Panc1 (cell line): ENCODE measurements at regions of chrX and their contacts with region 1.

Region 1: GRCh38 chrX:45322382-45322781 is 121.7 kb upstream of the DIPK2B start:
- DNase-seq: peak; percentile 56
- ATAC-seq: peak; percentile 85; the same call in 1 of the 2 replicates
- H3K4me3 ChIP-seq: no peak overlapping the region
- H3K27ac ChIP-seq: no peak overlapping the region
- H3K4me1 ChIP-seq: no peaks in the 10 kb centered on the region
- H3K27me3 ChIP-seq: no peaks in the 10 kb centered on the region
- CTCF ChIP-seq: peak; percentile 63

Region 2: GRCh38 chrX:45505214-45505613 is 182.8 kb after region 1 on chrX:
- CTCF ChIA-PET with region 1: no interaction called
- POLR2A ChIA-PET with region 1: no interaction called
- in situ Hi-C with region 1: no loop called
- intact Hi-C with region 1: loop called (anchors 10 kb)
- DNase-seq: no peak
- ATAC-seq: no peak
- H3K4me3 ChIP-seq: no peak overlapping the region
- H3K27ac ChIP-seq: peak overlapping the region; percentile 39; the same call in 1 of the 2 replicates
- H3K4me1 ChIP-seq: peaks cover 11% of the 10 kb centered on the region
- H3K27me3 ChIP-seq: no peaks in the 10 kb centered on the region
- CTCF ChIP-seq: no peak

Region 3: GRCh38 chrX:45749375-45749774 is 427.0 kb after region 1 on chrX:
- CTCF ChIA-PET with region 1: no interaction called
- POLR2A ChIA-PET with region 1: no interaction called
- in situ Hi-C with region 1: no loop called
- intact Hi-C with region 1: loop called (anchors 5 kb)
- DNase-seq: no peak
- ATAC-seq: peak; percentile 65; the same call in 1 of the 2 replicates
- H3K4me3 ChIP-seq: no peak overlapping the region
- H3K27ac ChIP-seq: no peak overlapping the region
- H3K4me1 ChIP-seq: peaks cover 33% of the 10 kb centered on the region
- H3K27me3 ChIP-seq: no peaks in the 10 kb centered on the region
- CTCF ChIP-seq: peak; percentile 33; the same call in 1 of the 2 replicates

Region 4: GRCh38 chrX:45762699-45763647 is 440.6 kb after region 1 on chrX:
- CTCF ChIA-PET with region 1: no interaction called
- POLR2A ChIA-PET with region 1: no interaction called
- in situ Hi-C with region 1: no loop called
- intact Hi-C with region 1: no loop called
- DNase-seq: no peak
- ATAC-seq: no peak
- H3K4me3 ChIP-seq: no peak overlapping the region; a peak in 1 of 4 replicates
- H3K27ac ChIP-seq: no peak overlapping the region
- H3K4me1 ChIP-seq: peaks cover 29% of the 10 kb centered on the region
- H3K27me3 ChIP-seq: no peaks in the 10 kb centered on the region
- CTCF ChIP-seq: no peak